ENCODE measurements at regions of chr3 and their contacts with region 1.

Region 1: GRCh38 chr3:21894459-21895340 is 143.7 kb upstream of the ZNF385D start:
- DNase-seq: peak in 1 of 2 donors; percentile 19
- ATAC-seq: peak in 7 of 8 donors; percentile 50 to 82 (median 71)
- H3K4me3 ChIP-seq: no peak overlapping the region
- H3K27ac ChIP-seq: peak overlapping the region in 4 of 10 donors; percentile 5 to 44 (median 33)
- H3K4me1 ChIP-seq: peaks cover 0 to 51% (median 0%) of the 10 kb centered on the region in 9 donors
- H3K27me3 ChIP-seq: no peaks in the 10 kb centered on the region
- CTCF ChIP-seq: peak; percentile 41 to 84 (median 70)

Region 2: DNA sequence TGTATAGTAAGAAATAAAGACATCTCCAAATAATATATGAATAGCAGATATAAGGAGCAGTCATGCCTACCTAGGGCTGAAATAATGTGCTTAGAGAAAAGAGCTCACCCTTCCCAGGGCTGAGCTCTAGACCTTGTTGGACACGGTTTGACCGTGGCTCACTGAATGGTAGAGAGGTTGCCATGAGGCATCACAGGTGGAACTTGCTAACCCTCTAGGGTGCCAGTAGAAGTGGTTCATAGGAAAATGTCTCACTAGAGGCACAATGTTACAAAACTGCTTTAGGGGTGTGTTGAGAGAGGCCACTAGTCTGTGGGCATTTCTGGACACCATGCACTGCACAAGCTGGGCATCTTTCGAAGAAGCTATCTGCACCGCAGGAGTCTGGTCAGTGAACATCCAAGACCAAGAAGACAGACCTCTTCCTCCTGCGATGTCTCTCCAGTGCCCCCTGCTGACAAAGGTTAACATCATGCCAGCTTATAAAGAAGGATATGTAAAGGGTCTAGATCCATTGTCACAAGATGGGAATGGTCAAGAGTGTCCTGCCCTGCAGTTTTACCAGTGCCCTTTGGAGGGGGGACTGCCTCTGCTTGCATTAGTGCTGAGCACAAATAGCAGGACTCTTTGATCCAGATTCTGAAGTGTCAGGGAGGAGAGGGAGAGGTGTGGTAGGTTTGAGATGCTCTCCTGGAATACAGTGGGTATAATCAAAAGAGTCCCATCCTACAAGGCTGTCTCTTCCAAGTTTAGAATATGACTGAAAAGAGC is 410.5 kb before region 1 on chr3:
- intact Hi-C with region 1: loop called in 2 of 10 experiments (anchors 10 kb)
- DNase-seq: peak; percentile 11 to 64
- ATAC-seq: peak in 7 of 8 donors; percentile 46 to 80 (median 67)
- H3K4me3 ChIP-seq: no peak overlapping the region
- H3K27ac ChIP-seq: no peak overlapping the region
- H3K4me1 ChIP-seq: peaks cover 0 to 1% (median 0%) of the 10 kb centered on the region in 9 donors
- H3K27me3 ChIP-seq: no peaks in the 10 kb centered on the region
- CTCF ChIP-seq: peak; percentile 36 to 74 (median 63)

Region 3: GRCh38 chr3:21909096-21909495 is 14.4 kb after region 1 on chr3:
- intact Hi-C with region 1: no loop called
- DNase-seq: no peak
- ATAC-seq: peak in 2 of 8 donors; percentile 29 to 45
- H3K4me3 ChIP-seq: no peak overlapping the region
- H3K27ac ChIP-seq: peak overlapping the region in 1 of 10 donors; percentile 27
- H3K4me1 ChIP-seq: peaks cover 0 to 35% (median 0%) of the 10 kb centered on the region in 9 donors
- H3K27me3 ChIP-seq: no peaks in the 10 kb centered on the region
- CTCF ChIP-seq: no peak

Region 4: GRCh38 chr3:21995079-21995607 is 100.4 kb after region 1 on chr3:
- intact Hi-C with region 1: no loop called
- DNase-seq: no peak
- ATAC-seq: no peak
- H3K4me3 ChIP-seq: no peak overlapping the region
- H3K27ac ChIP-seq: no peak overlapping the region
- H3K4me1 ChIP-seq: no peaks in the 10 kb centered on the region
- H3K27me3 ChIP-seq: no peaks in the 10 kb centered on the region
- CTCF ChIP-seq: no peak

Measured in heart right ventricle (tissue), 16 donors.